ENCODE measurements at regions of chr2 and their contacts with region 1.

Region 1: GRCh38 chr2:88669371-88670214 is 21.9 kb upstream of the RPIA start:
- DNase-seq: peak; percentile 60
- H3K4me3 ChIP-seq: no peak overlapping the region
- H3K27ac ChIP-seq: no peak overlapping the region
- H3K4me1 ChIP-seq: no peaks in the 10 kb centered on the region
- H3K27me3 ChIP-seq: peaks cover 5% of the 10 kb centered on the region
- CTCF ChIP-seq: peak; percentile 69

Region 2: GRCh38 chr2:88590998-88591613 is 78.5 kb before region 1 on chr2:
- CTCF ChIA-PET with region 1: interaction called, 10 read pairs
- POLR2A ChIA-PET with region 1: no interaction called
- intact Hi-C with region 1: loop called (anchors 2 kb)
- DNase-seq: peak; percentile 63
- H3K4me3 ChIP-seq: no peak overlapping the region
- H3K27ac ChIP-seq: no peak overlapping the region
- H3K4me1 ChIP-seq: no peaks in the 10 kb centered on the region
- H3K27me3 ChIP-seq: no peaks in the 10 kb centered on the region
- CTCF ChIP-seq: peak; percentile 80

Region 3: DNA sequence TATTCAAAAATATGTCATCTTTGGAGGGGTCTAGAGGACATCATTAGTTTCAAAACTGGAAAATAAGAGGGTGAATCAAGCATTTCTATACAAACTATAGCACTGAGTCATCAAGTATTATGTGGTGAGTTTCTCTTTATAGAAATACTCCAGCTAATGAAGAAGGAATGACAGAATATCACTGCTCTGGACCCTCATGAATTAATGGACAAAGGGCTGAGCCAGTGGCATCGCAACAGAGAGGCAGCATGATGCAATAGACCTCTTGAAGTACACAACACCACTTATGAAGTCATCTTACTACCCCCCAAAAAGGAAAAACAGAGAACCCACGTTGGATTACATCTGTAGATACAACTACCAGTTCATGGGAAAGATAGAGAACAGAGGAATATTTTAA is 14.9 kb before region 1 on chr2:
- CTCF ChIA-PET with region 1: interaction called, 12 read pairs
- POLR2A ChIA-PET with region 1: no interaction called
- intact Hi-C with region 1: no loop called
- DNase-seq: no peak
- H3K4me3 ChIP-seq: no peak overlapping the region
- H3K27ac ChIP-seq: no peak overlapping the region
- H3K4me1 ChIP-seq: no peaks in the 10 kb centered on the region
- H3K27me3 ChIP-seq: no peaks in the 10 kb centered on the region
- CTCF ChIP-seq: no peak

Measured in A673 (cell line).